PC-9 (cell line): ENCODE measurements at regions of chr17 and their contacts with region 1.

Region 1: GRCh38 chr17:30906101-30906911 is at the start of gene TEFM:
- DNase-seq: peak; percentile 82 to 91
- H3K4me3 ChIP-seq: peak within 1 kb of the TSS; percentile 85
- H3K27ac ChIP-seq: peak within 1 kb of the TSS; percentile 34
- H3K4me1 ChIP-seq: no peaks in the 10 kb centered on the region; the same call in 1 of the 2 replicates
- H3K27me3 ChIP-seq: no peaks in the 10 kb centered on the region
- CTCF ChIP-seq: no peak
- total RNA-seq, gene TEFM: 13.3 and 14.8 TPM in 2 replicates

Region 2: DNA sequence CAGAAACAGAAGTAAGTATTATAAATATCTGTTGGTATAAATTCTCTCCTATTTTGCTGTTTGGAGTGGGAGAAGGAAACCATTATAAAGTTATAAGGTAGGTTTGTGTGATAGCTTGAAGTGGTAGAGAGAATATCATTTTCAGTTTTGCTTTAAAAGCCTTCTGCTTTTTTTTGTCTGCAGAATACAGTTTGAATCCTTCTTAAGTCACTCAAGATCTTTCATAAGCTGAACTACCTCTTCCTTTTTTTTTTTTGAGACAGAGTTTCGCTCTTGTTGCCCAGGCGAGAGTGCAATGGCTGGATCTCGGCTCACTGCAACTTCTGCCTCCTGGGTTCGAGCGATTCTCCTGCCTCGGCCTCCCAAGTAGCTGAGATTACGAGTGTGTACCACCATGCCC is 65.5 kb before region 1 on chr17:
- CTCF ChIA-PET with region 1: no interaction called
- POLR2A ChIA-PET with region 1: no interaction called
- intact Hi-C with region 1: no loop called
- DNase-seq: no peak
- H3K4me3 ChIP-seq: no peak overlapping the region
- H3K27ac ChIP-seq: no peak overlapping the region
- H3K4me1 ChIP-seq: no peaks in the 10 kb centered on the region
- H3K27me3 ChIP-seq: no peaks in the 10 kb centered on the region
- CTCF ChIP-seq: no peak

Region 3: DNA sequence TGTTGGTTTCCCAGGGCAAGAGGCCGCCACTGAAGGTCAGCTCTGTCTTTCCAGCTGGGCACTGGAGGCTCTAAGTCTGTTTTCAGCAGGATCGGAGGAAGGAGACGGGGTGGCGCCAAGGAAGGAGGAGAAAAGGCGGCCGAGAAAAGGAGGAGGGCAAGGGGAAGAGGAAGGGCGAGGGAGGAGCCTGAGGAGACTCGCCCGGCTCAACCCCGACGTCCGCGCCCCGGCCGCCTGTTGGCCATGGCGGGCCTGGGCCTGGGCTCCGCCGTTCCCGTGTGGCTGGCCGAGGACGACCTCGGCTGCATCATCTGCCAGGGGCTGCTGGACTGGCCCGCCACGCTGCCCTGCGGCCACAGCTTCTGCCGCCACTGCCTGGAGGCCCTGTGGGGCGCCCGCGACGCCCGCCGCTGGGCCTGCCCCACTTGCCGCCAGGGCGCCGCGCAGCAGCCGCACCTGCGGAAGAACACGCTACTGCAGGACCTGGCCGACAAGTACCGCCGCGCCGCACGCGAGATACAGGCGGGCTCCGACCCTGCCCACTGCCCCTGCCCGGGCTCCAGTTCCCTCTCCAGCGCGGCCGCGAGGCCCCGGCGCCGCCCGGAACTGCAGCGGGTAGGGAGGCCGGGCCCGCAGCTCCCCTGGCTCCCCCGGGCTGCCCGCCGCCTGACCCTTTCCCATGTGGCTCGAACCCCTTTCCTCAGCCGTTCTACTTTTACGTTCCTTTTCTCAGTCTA is 64.7 kb after region 1 on chr17 and contains the start of gene RNF135:
- CTCF ChIA-PET with region 1: no interaction called
- POLR2A ChIA-PET with region 1: no interaction called
- intact Hi-C with region 1: loop called (anchors 1 kb)
- DNase-seq: peak; percentile 77 to 85
- H3K4me3 ChIP-seq: peak within 1 kb of the TSS; percentile 88
- H3K27ac ChIP-seq: peak within 1 kb of the TSS; percentile 78
- H3K4me1 ChIP-seq: peaks cover 15% of the 10 kb centered on the region; the same call in 1 of the 2 replicates
- H3K27me3 ChIP-seq: no peaks in the 10 kb centered on the region
- CTCF ChIP-seq: peak; percentile 31; the same call in 1 of the 2 replicates
- total RNA-seq, gene RNF135: 22.9 and 23.4 TPM in 2 replicates

Region 4: DNA sequence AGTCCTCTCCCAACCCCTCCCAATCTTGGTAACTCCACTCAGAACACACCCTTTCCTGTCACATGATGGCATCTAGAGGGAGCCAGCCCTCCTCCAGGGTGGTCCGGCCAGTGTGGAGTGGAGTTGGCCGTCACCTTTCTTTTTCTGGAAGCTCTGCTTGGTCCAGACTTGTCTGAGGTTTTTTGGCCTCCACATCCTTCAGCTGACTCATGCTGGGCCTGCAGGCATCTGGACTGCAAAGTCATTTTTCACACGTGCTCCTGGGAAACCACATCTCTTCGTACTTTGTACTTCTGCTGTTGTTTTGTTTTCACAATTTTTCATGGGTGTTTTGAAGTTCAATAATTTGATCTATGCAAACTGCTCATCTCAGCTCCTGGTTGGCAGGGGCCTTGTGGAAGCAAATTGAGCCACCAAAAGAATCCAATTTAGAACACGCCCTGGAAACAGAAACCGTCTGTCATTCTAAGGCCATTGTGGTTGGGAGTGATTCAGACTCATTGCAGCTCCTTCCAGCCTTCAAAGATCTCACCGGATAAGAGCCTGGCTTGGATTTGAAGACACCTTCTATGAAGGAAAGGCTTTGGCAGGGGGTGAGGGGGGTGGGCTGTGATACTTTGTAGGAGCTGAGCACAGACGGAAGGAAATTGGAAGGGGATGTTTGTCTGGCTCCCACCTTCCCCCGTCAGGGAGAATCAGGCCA is 146.0 kb after region 1 on chr17:
- CTCF ChIA-PET with region 1: no interaction called
- POLR2A ChIA-PET with region 1: no interaction called
- intact Hi-C with region 1: no loop called
- DNase-seq: peak; percentile 74 to 88
- H3K4me3 ChIP-seq: peak overlapping the region; percentile 5; the same call in 1 of the 2 replicates
- H3K27ac ChIP-seq: peak overlapping the region; percentile 69
- H3K4me1 ChIP-seq: peaks cover 21% of the 10 kb centered on the region
- H3K27me3 ChIP-seq: no peaks in the 10 kb centered on the region
- CTCF ChIP-seq: no peak

Region 5: DNA sequence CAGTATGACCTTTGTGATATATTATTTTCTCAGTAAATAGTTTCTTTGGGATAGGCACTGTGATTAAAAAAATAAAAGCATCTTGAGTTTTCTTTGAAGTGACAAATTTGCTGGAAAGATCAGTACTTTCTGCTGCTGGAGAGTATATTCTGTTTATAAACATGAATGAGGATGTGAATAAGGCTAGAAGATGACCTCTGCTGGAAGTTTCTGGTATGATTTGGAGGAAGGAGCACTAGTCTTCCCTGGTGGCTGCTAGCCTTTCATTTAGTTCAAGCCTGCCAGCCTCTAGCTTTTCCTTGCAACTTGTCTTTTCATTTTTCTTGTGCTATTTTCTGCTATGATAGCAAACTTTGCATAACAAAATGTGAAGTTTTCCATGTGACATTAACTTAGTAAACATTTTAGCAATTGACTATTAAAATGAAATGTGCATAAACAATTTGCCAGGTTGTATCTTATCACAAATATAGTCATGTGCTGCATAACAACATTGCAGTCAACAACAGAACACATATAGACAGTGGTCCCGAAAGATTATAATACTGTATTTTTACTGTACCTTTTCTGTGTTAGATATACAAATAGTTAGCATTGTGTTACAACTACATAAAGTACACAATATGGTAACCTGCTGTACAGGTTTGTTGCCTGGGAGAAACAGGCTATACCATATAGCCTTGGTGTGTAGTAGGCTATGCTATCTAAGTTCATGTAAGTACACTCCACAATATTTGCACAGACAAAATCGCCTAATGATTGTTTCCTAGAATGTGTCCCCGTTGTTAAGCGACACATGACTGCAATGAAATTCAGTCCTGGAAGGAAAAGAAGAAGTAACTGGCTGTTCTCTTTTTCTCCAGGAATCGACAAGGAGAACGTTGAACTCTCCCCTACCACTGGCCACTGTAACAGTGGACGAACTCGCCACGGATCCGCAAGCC is 467.1 kb after region 1 on chr17:
- CTCF ChIA-PET with region 1: no interaction called
- POLR2A ChIA-PET with region 1: no interaction called
- intact Hi-C with region 1: loop called (anchors 5 kb)
- DNase-seq: no peak
- H3K4me3 ChIP-seq: no peak overlapping the region
- H3K27ac ChIP-seq: no peak overlapping the region
- H3K4me1 ChIP-seq: no peaks in the 10 kb centered on the region
- H3K27me3 ChIP-seq: no peaks in the 10 kb centered on the region
- CTCF ChIP-seq: peak; percentile 75